ENCODE measurements at regions of chr13 and their contacts with region 1.

Region 1: GRCh38 chr13:45206340-45206739 is 5.5 kb upstream of the KCTD4 start:
- DNase-seq: peak; percentile 96
- ATAC-seq: peak; percentile 87
- H3K4me3 ChIP-seq: no peak overlapping the region
- H3K27ac ChIP-seq: peak overlapping the region; percentile 93
- H3K4me1 ChIP-seq: peaks cover 17% of the 10 kb centered on the region
- H3K27me3 ChIP-seq: no peaks in the 10 kb centered on the region
- CTCF ChIP-seq: no peak
- POLR2A ChIP-seq: no peak
- RAD21 ChIP-seq: no peak

Region 2: DNA sequence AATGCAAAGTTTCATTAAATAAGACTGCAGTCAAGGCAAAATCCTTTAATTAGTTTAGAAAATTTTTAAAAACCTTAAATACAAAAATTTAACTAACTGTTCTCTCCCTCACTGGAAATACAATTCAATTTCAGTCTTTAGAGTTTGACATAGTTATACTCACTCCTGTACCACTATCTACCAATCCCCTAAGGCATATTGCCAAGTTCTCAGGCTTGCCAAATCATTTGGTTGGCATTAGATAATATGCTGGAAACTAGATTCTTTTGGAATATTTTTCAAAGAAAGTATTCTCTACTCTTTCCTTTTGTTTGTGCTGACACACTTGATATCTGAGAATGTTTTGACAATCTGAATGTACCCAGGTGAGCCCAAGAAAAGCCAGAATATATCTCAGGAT is 707.4 kb before region 1 on chr13:
- CTCF ChIA-PET with region 1: no interaction called
- POLR2A ChIA-PET with region 1: no interaction called
- dilution Hi-C with region 1: no loop called
- in situ Hi-C with region 1: no loop called
- intact Hi-C with region 1: no loop called
- DNase-seq: no peak
- ATAC-seq: no peak
- H3K4me3 ChIP-seq: no peak overlapping the region
- H3K27ac ChIP-seq: no peak overlapping the region
- H3K4me1 ChIP-seq: no peaks in the 10 kb centered on the region; the same call in 1 of the 2 replicates
- H3K27me3 ChIP-seq: no peaks in the 10 kb centered on the region
- CTCF ChIP-seq: no peak
- POLR2A ChIP-seq: no peak
- RAD21 ChIP-seq: no peak

Region 3: GRCh38 chr13:45004096-45004495 is 202.2 kb before region 1 on chr13:
- CTCF ChIA-PET with region 1: no interaction called
- POLR2A ChIA-PET with region 1: no interaction called
- dilution Hi-C with region 1: no loop called
- in situ Hi-C with region 1: no loop called
- intact Hi-C with region 1: no loop called
- DNase-seq: no peak
- ATAC-seq: no peak
- H3K4me3 ChIP-seq: no peak overlapping the region
- H3K27ac ChIP-seq: no peak overlapping the region
- H3K4me1 ChIP-seq: no peaks in the 10 kb centered on the region
- H3K27me3 ChIP-seq: no peaks in the 10 kb centered on the region
- CTCF ChIP-seq: no peak
- POLR2A ChIP-seq: no peak
- RAD21 ChIP-seq: no peak

Region 4: GRCh38 chr13:45242070-45242469 is 35.7 kb after region 1 on chr13:
- CTCF ChIA-PET with region 1: no interaction called
- POLR2A ChIA-PET with region 1: no interaction called
- dilution Hi-C with region 1: no loop called
- in situ Hi-C with region 1: no loop called
- intact Hi-C with region 1: loop called (anchors 5 kb)
- DNase-seq: peak; percentile 53
- ATAC-seq: no peak; the same call in 1 of the 2 replicates
- H3K4me3 ChIP-seq: no peak overlapping the region
- H3K27ac ChIP-seq: no peak overlapping the region
- H3K4me1 ChIP-seq: peaks cover 3% of the 10 kb centered on the region; the same call in 1 of the 2 replicates
- H3K27me3 ChIP-seq: no peaks in the 10 kb centered on the region
- CTCF ChIP-seq: no peak
- POLR2A ChIP-seq: no peak
- RAD21 ChIP-seq: no peak

Region 5: GRCh38 chr13:45895881-45896280 is 689.5 kb after region 1 on chr13:
- CTCF ChIA-PET with region 1: no interaction called
- POLR2A ChIA-PET with region 1: no interaction called
- dilution Hi-C with region 1: no loop called
- in situ Hi-C with region 1: no loop called
- intact Hi-C with region 1: no loop called
- DNase-seq: no peak
- ATAC-seq: no peak
- H3K4me3 ChIP-seq: no peak overlapping the region
- H3K27ac ChIP-seq: no peak overlapping the region
- H3K4me1 ChIP-seq: no peaks in the 10 kb centered on the region
- H3K27me3 ChIP-seq: peaks cover 7% of the 10 kb centered on the region
- CTCF ChIP-seq: no peak
- POLR2A ChIP-seq: no peak
- RAD21 ChIP-seq: no peak